ENCODE measurements at regions of chr2 and their contacts with region 1.

Region 1: DNA sequence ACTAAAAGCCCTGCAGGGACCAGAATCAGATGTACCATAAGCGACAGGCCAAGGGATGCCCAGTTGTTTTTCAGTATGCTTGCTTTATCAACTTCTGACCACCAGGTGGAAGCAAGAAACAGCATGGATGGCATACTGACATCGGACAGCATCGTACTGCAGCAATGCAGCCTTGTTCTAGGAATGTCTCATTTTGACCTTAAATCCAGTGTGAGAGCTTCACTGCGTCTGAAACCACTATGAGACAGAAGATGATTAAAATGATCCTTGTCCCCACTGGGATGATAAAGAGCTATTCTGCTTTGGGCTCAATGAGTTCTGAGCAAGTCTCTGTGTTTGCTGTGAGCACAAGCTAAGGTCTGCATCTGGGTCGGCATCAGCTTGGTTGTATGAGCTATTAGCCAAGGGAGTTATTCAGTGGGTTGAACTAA is 54.3 kb downstream of the CDK15 start:
- DNase-seq: peak; percentile 60 to 77
- H3K4me3 ChIP-seq: no peak overlapping the region
- H3K4me3 Mint-ChIP-seq: no peak overlapping the region
- H3K27ac Mint-ChIP-seq: no peak overlapping the region
- H3K4me1 ChIP-seq: peaks cover 14% of the 10 kb centered on the region
- H3K4me1 Mint-ChIP-seq: peaks cover 18% of the 10 kb centered on the region
- H3K27me3 ChIP-seq: no peaks in the 10 kb centered on the region
- H3K27me3 Mint-ChIP-seq: no peaks in the 10 kb centered on the region
- CTCF ChIP-seq: peak; percentile 79 to 83

Region 2: GRCh38 chr2:201795607-201796477 is 64.8 kb before region 1 on chr2:
- CTCF ChIA-PET with region 1: no interaction called
- POLR2A ChIA-PET with region 1: no interaction called
- intact Hi-C with region 1: loop called (anchors 1 kb)
- DNase-seq: peak in 1 of 2 experiments; percentile 48
- H3K4me3 ChIP-seq: no peak overlapping the region
- H3K4me3 Mint-ChIP-seq: no peak overlapping the region
- H3K27ac Mint-ChIP-seq: no peak overlapping the region
- H3K4me1 ChIP-seq: peaks cover 5% of the 10 kb centered on the region; the same call in 1 of the 2 replicates
- H3K4me1 Mint-ChIP-seq: no peaks in the 10 kb centered on the region
- H3K27me3 ChIP-seq: no peaks in the 10 kb centered on the region
- H3K27me3 Mint-ChIP-seq: no peaks in the 10 kb centered on the region
- CTCF ChIP-seq: peak; percentile 58 to 87

Region 3: DNA sequence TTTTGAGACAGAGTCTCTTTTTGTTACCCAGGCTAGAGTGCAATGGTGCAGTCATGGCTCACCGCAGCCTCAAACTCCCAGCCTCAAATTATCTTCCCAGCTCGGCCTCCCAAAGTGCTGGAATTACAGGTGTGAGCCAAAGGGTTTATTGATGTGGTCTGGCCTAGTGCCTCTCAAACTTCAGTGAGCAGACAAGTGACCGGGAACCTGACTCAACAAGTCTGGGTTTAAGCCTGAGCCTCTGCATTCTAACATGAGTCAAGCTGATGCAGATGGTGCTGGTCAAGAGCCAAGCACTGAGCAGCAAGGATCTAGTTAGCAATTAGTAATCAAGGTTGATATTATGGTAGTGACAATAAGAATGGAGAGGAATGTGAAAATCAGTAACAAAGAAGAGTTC is 33.0 kb before region 1 on chr2:
- CTCF ChIA-PET with region 1: no interaction called
- POLR2A ChIA-PET with region 1: no interaction called
- intact Hi-C with region 1: no loop called
- DNase-seq: no peak
- H3K4me3 ChIP-seq: no peak overlapping the region
- H3K4me3 Mint-ChIP-seq: no peak overlapping the region
- H3K27ac Mint-ChIP-seq: no peak overlapping the region
- H3K4me1 ChIP-seq: no peaks in the 10 kb centered on the region
- H3K4me1 Mint-ChIP-seq: no peaks in the 10 kb centered on the region
- H3K27me3 ChIP-seq: no peaks in the 10 kb centered on the region
- H3K27me3 Mint-ChIP-seq: no peaks in the 10 kb centered on the region
- CTCF ChIP-seq: no peak

Region 4: GRCh38 chr2:201955702-201956141 is 95.1 kb after region 1 on chr2:
- CTCF ChIA-PET with region 1: interaction called, 3 read pairs
- POLR2A ChIA-PET with region 1: no interaction called
- intact Hi-C with region 1: loop called (anchors 2 kb)
- DNase-seq: no peak
- H3K4me3 ChIP-seq: no peak overlapping the region
- H3K4me3 Mint-ChIP-seq: no peak overlapping the region
- H3K27ac Mint-ChIP-seq: no peak overlapping the region
- H3K4me1 ChIP-seq: no peaks in the 10 kb centered on the region
- H3K4me1 Mint-ChIP-seq: no peaks in the 10 kb centered on the region
- H3K27me3 ChIP-seq: no peaks in the 10 kb centered on the region
- H3K27me3 Mint-ChIP-seq: no peaks in the 10 kb centered on the region
- CTCF ChIP-seq: no peak

Region 5: GRCh38 chr2:202056392-202057010 is 195.8 kb after region 1 on chr2:
- CTCF ChIA-PET with region 1: interaction called, 6 read pairs
- POLR2A ChIA-PET with region 1: no interaction called
- intact Hi-C with region 1: loop called (anchors 1 kb)
- DNase-seq: no peak
- H3K4me3 ChIP-seq: no peak overlapping the region
- H3K4me3 Mint-ChIP-seq: no peak overlapping the region
- H3K27ac Mint-ChIP-seq: no peak overlapping the region
- H3K4me1 ChIP-seq: peaks cover 22% of the 10 kb centered on the region
- H3K4me1 Mint-ChIP-seq: peaks cover 7% of the 10 kb centered on the region
- H3K27me3 ChIP-seq: no peaks in the 10 kb centered on the region
- H3K27me3 Mint-ChIP-seq: no peaks in the 10 kb centered on the region
- CTCF ChIP-seq: peak; percentile 44 to 52

Region 6: DNA sequence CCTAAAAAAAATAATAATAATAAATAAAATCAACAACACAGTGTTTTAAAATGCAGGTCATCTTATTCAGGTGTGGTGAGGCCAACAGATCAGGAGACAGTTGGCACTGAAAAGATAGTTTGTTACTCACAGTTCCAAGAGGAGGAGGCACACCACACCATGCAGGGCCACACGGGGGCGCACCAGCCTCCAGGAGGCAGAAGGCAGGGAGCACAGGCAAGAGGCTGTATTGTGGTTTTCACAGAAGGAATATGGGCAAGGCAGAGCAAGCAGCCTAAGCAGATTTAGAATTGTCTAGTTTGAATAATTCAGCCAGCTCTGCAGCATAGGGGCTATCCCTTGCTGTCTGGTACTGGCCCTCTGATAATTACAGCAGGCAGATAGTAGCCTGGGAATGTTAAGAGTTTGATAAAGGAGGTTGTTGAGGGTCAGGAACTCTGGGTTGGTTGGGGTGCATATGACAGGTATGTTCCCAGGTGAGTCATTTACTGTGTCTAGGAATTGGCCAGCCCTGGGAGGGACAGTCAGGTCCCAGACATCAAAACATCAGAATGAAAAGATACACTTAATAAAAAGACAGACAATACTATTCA is 243.7 kb after region 1 on chr2:
- CTCF ChIA-PET with region 1: interaction called, 3 read pairs
- POLR2A ChIA-PET with region 1: no interaction called
- intact Hi-C with region 1: loop called (anchors 2 kb)
- DNase-seq: peak; percentile 78 to 85
- H3K4me3 ChIP-seq: no peak overlapping the region
- H3K4me3 Mint-ChIP-seq: no peak overlapping the region
- H3K27ac Mint-ChIP-seq: peak overlapping the region; percentile 27
- H3K4me1 ChIP-seq: no peaks in the 10 kb centered on the region
- H3K4me1 Mint-ChIP-seq: no peaks in the 10 kb centered on the region
- H3K27me3 ChIP-seq: no peaks in the 10 kb centered on the region
- H3K27me3 Mint-ChIP-seq: no peaks in the 10 kb centered on the region
- CTCF ChIP-seq: peak; percentile 77 to 81

Region 7: DNA sequence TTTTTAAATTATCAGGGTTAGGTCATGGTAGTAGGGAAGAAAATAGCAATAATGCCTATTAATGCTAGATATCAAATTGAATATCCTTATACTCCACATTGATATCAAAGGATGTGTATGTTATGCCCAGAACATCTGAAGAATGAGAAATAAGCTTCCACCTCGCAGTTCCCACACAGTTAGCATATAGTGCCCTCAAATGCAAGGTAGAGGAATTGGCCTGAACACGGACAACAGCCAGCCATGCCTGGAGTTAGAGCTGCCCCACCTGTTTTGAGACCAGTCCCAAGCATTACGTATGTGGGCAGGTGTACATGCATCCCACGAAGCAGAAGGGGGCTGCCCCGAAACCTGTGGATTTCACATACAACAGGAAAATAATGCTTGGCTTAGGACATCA is 298.1 kb after region 1 on chr2:
- CTCF ChIA-PET with region 1: interaction called, 9 read pairs
- POLR2A ChIA-PET with region 1: no interaction called
- intact Hi-C with region 1: loop called (anchors 1 kb)
- DNase-seq: peak; percentile 46 to 57
- H3K4me3 ChIP-seq: no peak overlapping the region
- H3K4me3 Mint-ChIP-seq: no peak overlapping the region
- H3K27ac Mint-ChIP-seq: no peak overlapping the region
- H3K4me1 ChIP-seq: peaks cover 23% of the 10 kb centered on the region
- H3K4me1 Mint-ChIP-seq: peaks cover 19% of the 10 kb centered on the region
- H3K27me3 ChIP-seq: no peaks in the 10 kb centered on the region
- H3K27me3 Mint-ChIP-seq: no peaks in the 10 kb centered on the region
- CTCF ChIP-seq: peak in 1 of 2 experiments; percentile 46

Region 8: GRCh38 chr2:202178342-202178958 is 317.8 kb after region 1 on chr2:
- CTCF ChIA-PET with region 1: interaction called, 8 read pairs
- POLR2A ChIA-PET with region 1: no interaction called
- intact Hi-C with region 1: loop called (anchors 1 kb)
- DNase-seq: peak; percentile 62 to 77
- H3K4me3 ChIP-seq: no peak overlapping the region
- H3K4me3 Mint-ChIP-seq: no peak overlapping the region
- H3K27ac Mint-ChIP-seq: no peak overlapping the region
- H3K4me1 ChIP-seq: no peaks in the 10 kb centered on the region
- H3K4me1 Mint-ChIP-seq: no peaks in the 10 kb centered on the region
- H3K27me3 ChIP-seq: no peaks in the 10 kb centered on the region
- H3K27me3 Mint-ChIP-seq: no peaks in the 10 kb centered on the region
- CTCF ChIP-seq: peak; percentile 75 to 91

Measured in Caco-2 (cell line).